WTC11 (cell line): ENCODE measurements at regions of chr19 and their contacts with region 1.

Region 1: GRCh38 chr19:55258828-55259539 is at the start of gene PPP6R1:
- DNase-seq: peak; percentile 97
- ATAC-seq: peak; percentile 83
- H3K4me3 Mint-ChIP-seq: peak within 1 kb of the TSS; percentile 95
- H3K27ac Mint-ChIP-seq: peak within 1 kb of the TSS; percentile 96
- H3K4me1 Mint-ChIP-seq: peaks cover 48% of the 10 kb centered on the region
- H3K27me3 Mint-ChIP-seq: no peaks in the 10 kb centered on the region
- CTCF ChIP-seq: no peak
- total RNA-seq, gene PPP6R1: 78.4 to 91.8 TPM (median 83.2 TPM) in 3 replicates

Region 2: DNA sequence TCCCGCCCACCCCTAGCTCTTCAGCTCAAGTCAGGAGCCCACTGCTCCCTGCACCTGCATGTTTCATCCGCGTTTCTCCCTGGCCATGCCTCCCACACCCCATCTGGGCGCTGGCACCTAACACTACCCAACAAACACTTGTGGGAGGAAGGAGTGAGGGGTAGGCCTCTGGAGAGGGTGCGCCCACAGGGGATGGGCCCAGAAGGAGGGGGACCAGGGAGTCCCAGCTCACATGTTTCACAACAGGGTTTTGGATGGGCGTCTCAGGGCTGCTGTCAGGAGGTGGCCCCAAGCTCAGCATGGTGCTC is 18.3 kb before region 1 on chr19:
- CTCF ChIA-PET with region 1: no interaction called
- POLR2A ChIA-PET with region 1: no interaction called
- DNase-seq: no peak
- ATAC-seq: no peak
- H3K4me3 Mint-ChIP-seq: no peak overlapping the region
- H3K27ac Mint-ChIP-seq: no peak overlapping the region
- H3K4me1 Mint-ChIP-seq: no peaks in the 10 kb centered on the region
- H3K27me3 Mint-ChIP-seq: no peaks in the 10 kb centered on the region
- CTCF ChIP-seq: no peak

Region 3: GRCh38 chr19:55279770-55280643 is 21.0 kb after region 1 on chr19 and contains the start of gene HSPBP1:
- CTCF ChIA-PET with region 1: interaction called, 5 read pairs
- POLR2A ChIA-PET with region 1: interaction called, 15 read pairs
- DNase-seq: peak; percentile 99
- ATAC-seq: peak; percentile 91
- H3K4me3 Mint-ChIP-seq: peak within 1 kb of the TSS; percentile 96
- H3K27ac Mint-ChIP-seq: peak within 1 kb of the TSS; percentile 99
- H3K4me1 Mint-ChIP-seq: peaks cover 18% of the 10 kb centered on the region
- H3K27me3 Mint-ChIP-seq: no peaks in the 10 kb centered on the region
- CTCF ChIP-seq: no peak
- total RNA-seq, gene HSPBP1: 57.1 to 65.2 TPM (median 60.9 TPM) in 3 replicates

Region 4: DNA sequence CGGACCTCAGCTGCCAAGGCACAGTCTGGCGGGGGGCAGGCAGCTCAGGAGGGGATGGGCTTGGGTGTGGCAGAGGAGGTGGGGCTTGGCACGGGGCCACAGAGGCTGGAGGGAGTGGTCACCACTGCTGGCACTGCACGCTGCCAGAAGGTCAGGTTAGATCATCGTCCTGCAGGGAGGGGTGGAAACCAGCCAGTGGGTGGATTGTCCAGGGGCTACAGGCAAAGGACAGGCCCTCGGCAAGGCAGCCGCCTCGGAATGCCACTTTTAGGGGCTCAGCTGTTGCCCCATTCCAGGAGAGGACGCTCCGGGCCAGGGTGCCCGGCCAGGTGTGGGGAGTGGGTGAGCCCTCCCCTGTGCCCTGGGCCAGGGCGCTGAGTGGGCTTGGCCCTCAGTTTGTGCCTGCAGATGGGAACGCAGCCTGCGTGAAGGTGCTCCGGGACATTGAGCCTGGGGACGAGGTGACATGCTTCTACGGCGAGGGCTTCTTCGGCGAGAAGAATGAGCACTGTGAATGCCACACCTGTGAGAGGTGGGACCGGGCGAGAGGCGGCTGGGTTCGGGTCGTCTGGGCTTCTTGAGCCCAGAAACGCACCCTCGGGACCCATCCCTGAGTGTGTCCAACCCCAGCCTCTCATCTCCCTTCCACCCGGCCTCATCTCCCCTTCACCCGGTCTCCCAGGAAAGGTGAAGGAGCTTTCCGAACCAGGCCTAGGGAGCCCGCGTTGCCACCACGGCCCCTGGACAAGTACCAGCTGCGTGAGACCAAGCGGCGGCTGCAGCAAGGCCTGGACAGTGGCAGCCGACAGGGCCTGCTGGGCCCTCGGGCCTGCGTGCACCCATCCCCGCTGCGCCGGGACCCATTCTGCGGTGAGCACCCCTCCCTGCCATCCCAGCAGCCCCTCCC is 87.1 kb after region 1 on chr19:
- CTCF ChIA-PET with region 1: no interaction called
- POLR2A ChIA-PET with region 1: no interaction called
- DNase-seq: no peak
- ATAC-seq: no peak
- H3K4me3 Mint-ChIP-seq: no peak overlapping the region
- H3K27ac Mint-ChIP-seq: peak overlapping the region; percentile 24; the same call in 1 of the 2 replicates
- H3K4me1 Mint-ChIP-seq: peaks cover 47% of the 10 kb centered on the region
- H3K27me3 Mint-ChIP-seq: peaks cover 8% of the 10 kb centered on the region
- CTCF ChIP-seq: no peak

Region 5: GRCh38 chr19:55418185-55418584 is 159.2 kb after region 1 on chr19:
- CTCF ChIA-PET with region 1: interaction called, 10 read pairs
- POLR2A ChIA-PET with region 1: no interaction called
- DNase-seq: peak; percentile 71
- ATAC-seq: peak; percentile 97
- H3K4me3 Mint-ChIP-seq: no peak overlapping the region
- H3K27ac Mint-ChIP-seq: no peak overlapping the region; the same call in 1 of the 2 replicates
- H3K4me1 Mint-ChIP-seq: peaks cover 2% of the 10 kb centered on the region
- H3K27me3 Mint-ChIP-seq: peaks cover 78% of the 10 kb centered on the region
- CTCF ChIP-seq: peak; percentile 40